ENCODE measurements at regions of chr1 and their contacts with region 1.

Region 1: GRCh38 chr1:113963281-113963906 is 15.9 kb upstream of the OLFML3 start:
- DNase-seq: no peak
- H3K4me3 ChIP-seq: no peak overlapping the region
- H3K27ac ChIP-seq: peak overlapping the region in 42 of 59 donors; percentile 3 to 73 (median 38)
- H3K27me3 ChIP-seq: no peaks in the 10 kb centered on the region
- CTCF ChIP-seq: peak in 42 of 56 donors; percentile 8 to 56 (median 32)

Region 2: GRCh38 chr1:113353581-113353980 is 609.8 kb before region 1 on chr1:
- intact Hi-C with region 1: no loop called
- DNase-seq: no peak
- H3K4me3 ChIP-seq: no peak overlapping the region
- H3K27ac ChIP-seq: no peak overlapping the region
- H3K27me3 ChIP-seq: no peaks in the 10 kb centered on the region
- CTCF ChIP-seq: no peak

Region 3: GRCh38 chr1:113835642-113836307 is 127.6 kb before region 1 on chr1:
- intact Hi-C with region 1: loop called (anchors 10 kb)
- DNase-seq: peak in 1 of 10 donors; percentile 14
- H3K4me3 ChIP-seq: peak overlapping the region in 18 of 59 donors; percentile 2 to 42 (median 19)
- H3K27ac ChIP-seq: no peak overlapping the region
- H3K27me3 ChIP-seq: no peaks in the 10 kb centered on the region
- CTCF ChIP-seq: peak; percentile 54 to 92 (median 74)

Measured in dorsolateral prefrontal cortex (tissue), 120 donors.